ENCODE measurements at regions of chr20 and their contacts with region 1.

Region 1: GRCh38 chr20:8389381-8390036 is 257.4 kb downstream of the PLCB1 start:
- DNase-seq: no peak
- ATAC-seq: peak in 1 of 2 donors; percentile 65
- H3K4me3 ChIP-seq: peak overlapping the region in 3 of 4 donors; percentile 6 to 27 (median 22)
- H3K27ac ChIP-seq: no peak overlapping the region
- H3K4me1 ChIP-seq: peaks cover 0 to 28% of the 10 kb centered on the region in 2 donors
- H3K27me3 ChIP-seq: no peaks in the 10 kb centered on the region
- CTCF ChIP-seq: peak; percentile 46 to 68 (median 59)
- POLR2A ChIP-seq: no peak

Region 2: DNA sequence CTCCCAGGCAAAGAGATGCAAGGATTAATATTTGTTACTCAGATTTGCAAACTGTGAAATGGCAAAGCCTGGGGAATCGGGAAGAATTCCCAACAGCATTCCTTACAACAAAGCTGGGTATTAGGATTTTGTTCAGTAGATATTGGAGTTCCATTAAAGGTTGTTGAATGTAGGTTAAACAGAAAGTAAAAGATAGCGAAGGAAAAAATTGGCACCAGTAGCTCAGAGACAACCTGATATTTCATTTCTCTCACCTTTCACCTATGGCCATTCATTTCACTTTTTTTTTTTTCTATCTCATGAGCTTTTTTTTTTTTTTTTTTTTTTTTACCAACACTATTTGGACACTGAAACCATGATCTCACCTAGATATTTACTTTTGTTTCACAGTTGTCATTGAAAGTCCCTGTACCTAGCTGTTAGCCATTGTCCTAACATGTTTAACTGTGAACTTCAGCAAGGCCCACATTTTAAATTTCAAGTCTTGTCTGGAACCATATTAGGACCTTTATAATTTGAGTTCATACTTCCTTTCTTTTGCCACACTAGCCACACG is 1001.8 kb before region 1 on chr20:
- in situ Hi-C with region 1: no loop called
- intact Hi-C with region 1: no loop called
- DNase-seq: no peak
- ATAC-seq: no peak
- H3K4me3 ChIP-seq: no peak overlapping the region
- H3K27ac ChIP-seq: no peak overlapping the region
- H3K4me1 ChIP-seq: no peaks in the 10 kb centered on the region
- H3K27me3 ChIP-seq: no peaks in the 10 kb centered on the region
- CTCF ChIP-seq: no peak
- POLR2A ChIP-seq: no peak

Region 3: GRCh38 chr20:8043687-8044282 is 345.7 kb before region 1 on chr20:
- in situ Hi-C with region 1: loop called in 2 of 4 experiments (anchors 10 to 25 kb)
- intact Hi-C with region 1: loop called (anchors 1 kb)
- DNase-seq: no peak
- ATAC-seq: peak; percentile 80
- H3K4me3 ChIP-seq: no peak overlapping the region
- H3K27ac ChIP-seq: no peak overlapping the region
- H3K4me1 ChIP-seq: no peaks in the 10 kb centered on the region
- H3K27me3 ChIP-seq: no peaks in the 10 kb centered on the region
- CTCF ChIP-seq: peak; percentile 41 to 76 (median 65)
- POLR2A ChIP-seq: no peak

Region 4: GRCh38 chr20:8344106-8344505 is 45.4 kb before region 1 on chr20:
- in situ Hi-C with region 1: no loop called
- intact Hi-C with region 1: no loop called
- DNase-seq: no peak
- ATAC-seq: no peak
- H3K4me3 ChIP-seq: no peak overlapping the region
- H3K27ac ChIP-seq: no peak overlapping the region
- H3K4me1 ChIP-seq: peaks cover 35 to 51% of the 10 kb centered on the region in 2 donors
- H3K27me3 ChIP-seq: no peaks in the 10 kb centered on the region
- CTCF ChIP-seq: no peak
- POLR2A ChIP-seq: no peak

Region 5: GRCh38 chr20:8860011-8860495 is 470.5 kb after region 1 on chr20:
- in situ Hi-C with region 1: no loop called
- intact Hi-C with region 1: no loop called
- DNase-seq: no peak
- ATAC-seq: no peak
- H3K4me3 ChIP-seq: no peak overlapping the region
- H3K27ac ChIP-seq: no peak overlapping the region
- H3K4me1 ChIP-seq: no peaks in the 10 kb centered on the region
- H3K27me3 ChIP-seq: no peaks in the 10 kb centered on the region
- CTCF ChIP-seq: no peak
- POLR2A ChIP-seq: no peak

Measured in gastrocnemius medialis (tissue), 4 donors.